Colonic mucosa (tissue), 4 donors: ENCODE measurements at regions of chr5 and their contacts with region 1.

Region 1: GRCh38 chr5:131170540-131171275 is at the start of gene LYRM7:
- DNase-seq: peak; percentile 98
- H3K4me3 ChIP-seq: peak within 1 kb of the TSS; percentile 54
- H3K27ac ChIP-seq: peak within 1 kb of the TSS; percentile 84
- H3K4me1 ChIP-seq: no peaks in the 10 kb centered on the region
- H3K27me3 ChIP-seq: no peaks in the 10 kb centered on the region
- CTCF ChIP-seq: no peak
- total RNA-seq, gene LYRM7: 12.1 TPM

Region 2: DNA sequence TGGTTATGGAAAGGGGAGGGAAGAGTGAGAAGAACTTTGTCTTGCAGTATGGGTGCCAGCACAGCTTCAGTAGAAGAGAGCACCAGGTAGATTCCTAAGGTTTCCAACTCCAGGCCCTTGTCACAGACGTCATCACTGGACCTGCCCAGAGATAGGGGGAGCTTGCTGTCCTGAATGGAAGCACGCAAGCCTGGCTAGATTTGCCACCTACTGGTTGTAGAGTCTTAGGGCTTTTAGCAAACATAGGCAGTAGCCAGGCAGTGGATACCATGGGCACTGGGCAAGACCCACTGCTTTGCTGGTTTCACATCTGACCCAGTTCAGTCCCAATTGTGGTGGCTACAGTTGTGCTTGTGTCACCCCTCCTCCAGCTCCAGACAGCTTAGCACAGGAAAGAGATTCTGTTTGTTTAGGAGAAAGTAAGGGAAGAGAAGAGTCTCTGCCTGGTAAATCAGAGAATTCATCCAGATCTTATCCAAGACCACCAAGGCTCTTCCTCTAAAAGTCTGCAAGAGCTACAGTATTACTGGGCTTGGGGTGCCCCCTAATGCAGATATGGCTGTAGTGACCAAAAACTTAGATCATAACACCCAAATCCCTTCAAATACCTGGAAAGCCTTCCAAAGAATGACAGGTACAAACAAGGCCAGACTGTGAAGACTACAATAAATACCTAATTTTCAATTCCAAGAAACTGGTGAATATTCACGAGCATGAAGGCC is 164.6 kb before region 1 on chr5:
- intact Hi-C with region 1: no loop called
- DNase-seq: no peak
- H3K4me3 ChIP-seq: no peak overlapping the region
- H3K27ac ChIP-seq: no peak overlapping the region
- H3K4me1 ChIP-seq: no peaks in the 10 kb centered on the region
- H3K27me3 ChIP-seq: no peaks in the 10 kb centered on the region
- CTCF ChIP-seq: no peak

Region 3: DNA sequence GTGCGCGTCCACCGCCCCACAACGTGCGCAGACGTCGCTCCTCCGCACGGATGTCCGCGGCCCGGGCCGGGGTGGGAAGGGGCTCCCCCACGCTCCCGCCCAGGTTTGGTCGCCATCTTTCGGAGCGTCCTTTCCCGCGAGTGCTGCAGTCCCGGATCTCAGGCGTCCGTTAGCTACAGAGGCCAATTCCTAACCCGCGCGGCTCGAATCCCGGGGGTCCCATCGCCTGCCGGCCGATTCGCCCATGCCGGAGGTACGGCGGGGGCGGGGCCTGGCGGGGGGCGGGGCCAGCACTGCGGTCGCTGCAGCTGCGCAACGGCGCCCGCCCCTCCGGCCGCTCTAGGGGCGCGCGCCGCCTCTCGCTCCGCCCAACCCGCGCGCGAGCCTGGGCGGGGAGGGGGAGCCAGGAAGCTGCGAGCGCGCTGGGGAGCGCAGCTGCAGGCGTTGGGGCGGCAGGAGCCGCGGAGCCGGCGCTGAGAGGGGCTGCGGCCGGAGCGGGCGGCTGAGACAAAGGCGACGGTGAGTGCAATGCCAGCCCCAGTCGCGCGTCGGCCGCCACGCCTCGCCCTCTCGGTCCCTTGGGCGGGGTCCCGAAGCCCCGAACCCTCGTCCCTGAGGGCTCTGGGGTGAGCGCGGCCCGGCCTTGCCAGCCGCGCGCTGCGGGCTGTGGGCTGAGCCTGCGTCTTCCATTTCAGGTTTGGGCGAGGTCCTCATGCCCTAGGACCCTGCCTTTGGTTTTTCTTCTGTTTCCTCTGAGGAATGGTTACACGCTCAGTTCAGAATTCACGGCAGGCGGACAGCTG is 93.1 kb after region 1 on chr5 and contains the start of gene CDC42SE2:
- intact Hi-C with region 1: loop called (anchors 5 kb)
- DNase-seq: peak; percentile 86
- H3K4me3 ChIP-seq: peak within 1 kb of the TSS; percentile 91
- H3K27ac ChIP-seq: peak within 1 kb of the TSS; percentile 96
- H3K4me1 ChIP-seq: no peaks in the 10 kb centered on the region
- H3K27me3 ChIP-seq: no peaks in the 10 kb centered on the region
- CTCF ChIP-seq: no peak
- total RNA-seq, gene CDC42SE2: 74.2 to 110 TPM